Cardiac septum (tissue), 1 donor: ENCODE measurements at regions of chr3 and their contacts with region 1.

Region 1: DNA sequence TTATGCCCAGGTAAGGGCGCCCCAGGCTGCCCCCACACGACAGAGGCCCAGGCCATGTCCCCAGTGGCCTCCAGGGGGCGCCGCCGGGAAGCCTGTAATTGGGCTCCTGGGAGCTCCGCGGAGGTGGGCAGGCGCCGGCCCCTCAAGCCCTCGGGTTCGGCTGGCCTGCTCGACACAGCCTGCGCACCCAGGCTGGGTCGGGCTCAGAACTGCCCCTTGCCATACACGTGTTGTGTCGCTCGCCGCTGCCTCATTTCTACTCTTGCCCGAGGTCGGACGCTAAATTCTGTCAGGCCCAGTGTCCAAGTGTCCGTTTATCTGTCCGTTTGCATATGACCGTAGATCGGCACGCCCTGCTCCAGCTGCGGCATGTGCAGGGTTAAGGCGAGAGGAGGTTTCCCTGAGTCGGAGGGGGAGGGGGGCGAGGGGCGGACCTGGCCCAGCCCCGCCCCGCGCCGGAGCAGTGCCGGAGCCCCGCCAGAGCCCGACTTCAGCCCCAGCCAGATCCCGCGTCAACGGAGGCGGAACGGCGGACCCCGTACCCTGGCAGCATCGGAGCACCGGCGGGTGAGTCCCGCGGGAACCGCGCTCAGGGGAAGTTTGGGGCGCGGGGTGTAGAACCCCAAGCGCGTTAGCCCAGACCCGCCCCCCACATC is at the start of gene KLHDC8B:
- DNase-seq: peak; percentile 94
- total RNA-seq, gene KLHDC8B: 132 TPM

Region 2: GRCh38 chr3:49112262-49112661 is 59.0 kb before region 1 on chr3:
- intact Hi-C with region 1: no loop called
- DNase-seq: no peak

Region 3: DNA sequence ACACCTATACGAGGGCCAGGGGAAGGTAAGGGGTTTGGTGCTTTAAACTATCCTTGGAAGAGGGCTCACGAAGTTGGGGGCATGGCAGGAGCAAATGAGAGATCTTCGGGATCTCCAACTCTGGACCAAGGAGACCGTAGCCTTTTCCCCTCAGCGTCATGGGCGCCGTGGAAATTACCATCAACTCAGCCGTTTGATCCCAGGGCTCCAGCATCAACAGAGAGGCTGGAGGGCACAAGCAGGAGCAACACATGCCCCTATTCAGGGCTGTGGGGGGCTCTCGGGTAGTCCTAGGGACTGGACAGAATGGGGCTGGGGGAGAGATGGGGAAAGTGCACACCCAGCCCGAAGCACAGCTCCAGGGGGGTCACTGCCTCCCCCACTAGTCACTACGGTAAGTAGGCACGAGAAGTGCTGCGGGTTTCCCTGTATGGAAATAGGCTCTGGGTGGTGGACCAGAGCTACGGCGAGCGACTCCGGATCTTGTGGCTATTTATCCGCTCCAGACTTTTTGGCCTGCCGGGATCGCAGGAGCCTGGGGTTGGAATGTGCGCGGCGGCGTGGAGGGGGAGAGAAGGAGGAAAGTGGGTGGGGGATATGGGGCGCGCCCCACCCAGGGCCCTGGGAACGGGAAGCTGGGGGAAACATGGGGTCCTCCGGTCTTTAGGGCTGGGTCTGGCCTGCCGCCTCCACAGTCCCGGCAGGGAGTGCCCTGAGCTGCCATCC is 37.9 kb before region 1 on chr3:
- intact Hi-C with region 1: loop called (anchors 2 kb)
- DNase-seq: peak; percentile 92

Region 4: DNA sequence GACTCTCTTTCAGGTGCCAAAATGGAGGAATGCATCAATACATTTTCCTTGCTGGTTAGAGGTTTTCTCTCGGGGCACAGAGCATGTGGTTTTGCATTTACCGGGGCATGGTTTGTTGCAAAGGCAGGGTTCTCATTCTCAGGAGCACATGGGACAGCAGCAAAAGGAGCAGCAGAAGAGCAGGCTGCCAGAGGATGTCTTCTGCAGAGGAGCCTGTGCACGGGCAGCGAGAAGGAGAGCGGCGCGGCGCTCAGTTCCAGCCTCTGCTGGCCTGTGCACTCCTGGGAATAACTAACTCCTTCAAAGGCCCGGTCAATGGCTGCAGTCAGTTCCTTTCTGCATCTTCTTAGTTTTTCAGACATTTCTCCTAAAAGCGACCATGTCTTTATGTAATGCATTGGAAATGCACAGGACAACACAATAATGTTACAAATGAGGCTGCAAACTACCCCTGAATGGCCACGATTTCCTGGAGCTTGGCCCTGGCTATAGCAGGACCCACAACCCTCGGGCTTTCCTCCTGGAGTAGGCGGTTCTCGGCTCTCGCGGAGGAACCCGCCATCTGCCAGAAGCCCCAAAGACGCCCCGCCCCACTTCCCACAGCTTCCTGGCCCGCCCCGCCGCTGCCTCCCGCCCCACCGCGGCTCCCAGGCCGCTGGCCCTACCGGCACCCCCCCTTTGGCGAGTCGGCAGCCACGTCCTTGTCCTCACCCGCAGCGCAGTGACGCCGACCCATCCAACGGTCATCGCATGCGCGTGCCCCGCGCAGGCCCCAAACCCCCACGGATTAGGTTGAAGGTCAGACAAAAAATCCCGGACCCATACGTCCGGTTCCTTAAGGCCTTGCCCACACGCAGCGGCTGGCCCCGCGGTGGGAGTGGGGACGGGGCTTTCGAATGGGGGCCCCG is 105.5 kb after region 1 on chr3 and contains the start of gene C3orf62:
- intact Hi-C with region 1: loop called (anchors 1 kb)
- DNase-seq: peak; percentile 96
- total RNA-seq, gene C3orf62: 2.9 TPM

Region 5: DNA sequence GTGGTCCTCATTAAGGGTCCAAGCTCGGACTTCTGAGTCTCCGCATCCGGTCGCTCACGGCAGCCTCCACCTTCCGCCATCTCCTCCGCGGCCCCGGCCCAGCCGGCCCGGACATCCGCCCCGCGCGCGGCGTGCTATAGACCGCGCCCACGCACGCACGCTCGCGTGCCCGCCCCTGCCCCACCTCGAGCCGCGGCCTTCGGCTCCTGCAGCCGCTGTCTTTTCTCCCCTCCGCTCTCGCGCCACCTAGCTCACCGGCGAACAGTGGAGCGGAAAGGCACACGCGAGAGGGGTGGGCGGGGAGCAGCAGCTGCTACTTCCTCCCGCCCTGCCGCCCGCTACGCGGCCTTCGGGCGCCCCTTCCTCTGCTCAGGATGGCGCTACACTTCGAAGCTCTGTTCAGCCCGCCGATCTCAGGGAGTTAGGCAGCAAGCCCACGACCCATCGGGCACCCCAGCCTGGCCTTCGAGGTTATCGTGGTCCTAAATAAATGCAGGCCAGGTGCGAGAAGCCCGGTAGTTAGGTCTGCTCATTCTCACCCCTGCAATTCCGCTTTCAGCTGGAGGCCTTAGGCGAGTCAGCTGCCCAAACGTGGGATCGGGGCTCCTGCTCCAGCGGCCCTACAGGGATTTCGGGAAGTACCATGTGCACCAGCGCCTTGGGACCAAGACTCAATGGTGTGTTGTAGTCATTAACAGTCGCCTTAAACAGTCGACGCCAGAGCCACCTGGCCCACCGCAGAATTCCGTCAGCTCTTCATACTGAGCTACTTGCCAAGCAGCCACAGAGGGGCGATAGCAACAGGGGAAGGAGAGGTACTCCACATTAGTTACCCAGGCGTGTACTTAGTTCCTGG is 168.9 kb after region 1 on chr3 and contains the start of gene USP4:
- intact Hi-C with region 1: loop called (anchors 1 kb)
- DNase-seq: peak; percentile 96
- total RNA-seq, gene USP4: 44.5 TPM

Region 6: DNA sequence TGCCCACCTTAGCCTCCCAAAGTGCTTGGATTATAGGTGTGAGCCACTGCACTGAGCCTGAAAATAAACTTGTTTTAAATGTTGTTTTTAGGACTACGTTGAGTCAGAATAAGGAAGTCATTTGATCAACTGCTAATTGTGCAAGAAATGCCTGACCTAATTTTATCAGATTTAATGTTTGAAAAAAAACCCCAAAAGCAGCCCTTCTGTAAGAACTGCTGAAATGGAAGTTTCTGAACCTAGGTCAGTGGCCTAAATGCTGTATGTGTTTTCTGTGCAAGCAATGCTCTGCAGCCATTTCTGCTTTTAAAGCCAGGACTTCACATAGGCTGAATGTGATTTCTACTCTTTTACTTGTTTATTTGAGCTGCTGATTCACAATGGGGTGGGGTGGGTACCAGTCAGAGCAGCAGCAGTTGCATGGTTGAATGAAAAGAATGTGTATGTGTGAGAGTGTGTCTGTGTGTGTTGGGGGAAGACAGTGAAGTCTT is 180.3 kb after region 1 on chr3:
- intact Hi-C with region 1: no loop called
- DNase-seq: no peak